ENCODE measurements at regions of chr2 and their contacts with region 1.

Region 1: DNA sequence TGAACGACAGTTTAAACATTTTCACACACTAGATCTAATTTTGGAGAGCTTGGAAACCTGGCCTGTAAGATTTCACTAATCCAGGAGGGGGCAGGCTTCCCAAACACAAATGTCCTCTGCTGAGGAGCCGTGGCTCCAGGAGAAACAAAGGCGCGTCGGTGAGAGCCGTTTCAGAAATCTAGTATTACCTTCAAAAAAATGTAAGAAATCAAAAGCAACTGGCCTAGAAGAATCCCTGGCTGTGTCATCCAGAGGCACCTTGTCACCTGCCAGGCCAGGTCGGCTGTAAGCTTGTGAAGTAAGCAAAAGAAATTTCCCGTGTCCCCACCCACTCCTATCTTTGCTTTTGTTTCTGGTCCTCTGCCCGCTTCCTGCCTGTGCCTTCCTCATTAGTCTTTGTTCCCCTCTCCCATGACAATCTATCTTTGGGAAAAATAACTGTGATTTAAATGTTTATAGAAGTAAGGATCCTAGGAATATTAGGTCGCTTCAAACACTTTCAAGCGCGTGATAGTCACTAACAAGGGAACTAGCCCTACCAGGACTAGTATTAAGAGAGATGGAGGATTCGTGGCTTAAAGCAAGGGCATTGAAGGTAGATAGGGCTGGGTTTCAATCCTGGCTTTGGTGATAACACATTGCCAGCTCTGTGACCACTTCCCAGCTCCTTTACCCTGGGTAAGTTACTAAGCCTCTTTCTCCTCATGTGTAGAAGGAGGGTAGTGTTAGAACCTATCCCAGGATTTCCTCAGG is 99.5 kb upstream of the STK39 start:
- DNase-seq: peak; percentile 75
- ATAC-seq: peak; percentile 74
- H3K4me3 ChIP-seq: peak overlapping the region in 4 of 5 experiments; percentile 39 to 63 (median 52)
- H3K4me3 Mint-ChIP-seq: peak overlapping the region; percentile 86
- H3K27ac ChIP-seq: no peak overlapping the region
- H3K27ac Mint-ChIP-seq: no peak overlapping the region
- H3K4me1 ChIP-seq: peaks cover 17 to 22% of the 10 kb centered on the region in 2 donors
- H3K4me1 Mint-ChIP-seq: peaks cover 17% of the 10 kb centered on the region
- H3K27me3 ChIP-seq: no peaks in the 10 kb centered on the region
- H3K27me3 Mint-ChIP-seq: peaks cover 5% of the 10 kb centered on the region
- CTCF ChIP-seq: peak; percentile 88

Region 2: GRCh38 chr2:168336864-168337263 is 10.0 kb before region 1 on chr2:
- CTCF ChIA-PET with region 1: interaction called, 14 read pairs
- POLR2A ChIA-PET with region 1: no interaction called
- intact Hi-C with region 1: no loop called
- DNase-seq: peak; percentile 39
- ATAC-seq: peak; percentile 68
- H3K4me3 ChIP-seq: no peak overlapping the region
- H3K4me3 Mint-ChIP-seq: no peak overlapping the region
- H3K27ac ChIP-seq: no peak overlapping the region
- H3K27ac Mint-ChIP-seq: no peak overlapping the region
- H3K4me1 ChIP-seq: no peaks in the 10 kb centered on the region
- H3K4me1 Mint-ChIP-seq: peaks cover 3% of the 10 kb centered on the region
- H3K27me3 ChIP-seq: no peaks in the 10 kb centered on the region
- H3K27me3 Mint-ChIP-seq: peaks cover 10% of the 10 kb centered on the region
- CTCF ChIP-seq: peak; percentile 33

Region 3: DNA sequence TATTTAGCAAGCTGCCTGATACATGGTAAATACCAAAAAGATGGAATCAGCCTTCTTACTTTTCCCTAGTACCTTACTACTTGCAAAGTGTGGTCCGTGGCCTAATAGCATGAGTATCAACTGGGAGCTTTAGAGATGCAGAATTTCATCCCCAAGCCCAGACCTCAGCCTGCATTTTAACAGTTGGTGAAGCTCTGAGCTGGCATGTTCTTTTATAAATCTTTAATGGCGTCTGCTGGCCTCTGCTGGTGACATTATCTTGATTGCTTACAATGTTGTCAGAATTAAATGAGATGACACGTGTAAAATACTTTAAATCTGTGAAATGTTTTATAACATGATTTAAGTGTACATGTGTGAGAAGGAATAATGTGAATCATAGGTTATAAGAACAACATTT is 340.4 kb after region 1 on chr2:
- CTCF ChIA-PET with region 1: interaction called, 88 read pairs
- POLR2A ChIA-PET with region 1: no interaction called
- intact Hi-C with region 1: loop called (anchors 1 kb)
- DNase-seq: peak; percentile 47
- ATAC-seq: no peak
- H3K4me3 ChIP-seq: no peak overlapping the region
- H3K4me3 Mint-ChIP-seq: no peak overlapping the region
- H3K27ac ChIP-seq: no peak overlapping the region
- H3K27ac Mint-ChIP-seq: no peak overlapping the region
- H3K4me1 ChIP-seq: no peaks in the 10 kb centered on the region
- H3K4me1 Mint-ChIP-seq: no peaks in the 10 kb centered on the region
- H3K27me3 ChIP-seq: no peaks in the 10 kb centered on the region
- H3K27me3 Mint-ChIP-seq: no peaks in the 10 kb centered on the region
- CTCF ChIP-seq: peak; percentile 45

Region 4: DNA sequence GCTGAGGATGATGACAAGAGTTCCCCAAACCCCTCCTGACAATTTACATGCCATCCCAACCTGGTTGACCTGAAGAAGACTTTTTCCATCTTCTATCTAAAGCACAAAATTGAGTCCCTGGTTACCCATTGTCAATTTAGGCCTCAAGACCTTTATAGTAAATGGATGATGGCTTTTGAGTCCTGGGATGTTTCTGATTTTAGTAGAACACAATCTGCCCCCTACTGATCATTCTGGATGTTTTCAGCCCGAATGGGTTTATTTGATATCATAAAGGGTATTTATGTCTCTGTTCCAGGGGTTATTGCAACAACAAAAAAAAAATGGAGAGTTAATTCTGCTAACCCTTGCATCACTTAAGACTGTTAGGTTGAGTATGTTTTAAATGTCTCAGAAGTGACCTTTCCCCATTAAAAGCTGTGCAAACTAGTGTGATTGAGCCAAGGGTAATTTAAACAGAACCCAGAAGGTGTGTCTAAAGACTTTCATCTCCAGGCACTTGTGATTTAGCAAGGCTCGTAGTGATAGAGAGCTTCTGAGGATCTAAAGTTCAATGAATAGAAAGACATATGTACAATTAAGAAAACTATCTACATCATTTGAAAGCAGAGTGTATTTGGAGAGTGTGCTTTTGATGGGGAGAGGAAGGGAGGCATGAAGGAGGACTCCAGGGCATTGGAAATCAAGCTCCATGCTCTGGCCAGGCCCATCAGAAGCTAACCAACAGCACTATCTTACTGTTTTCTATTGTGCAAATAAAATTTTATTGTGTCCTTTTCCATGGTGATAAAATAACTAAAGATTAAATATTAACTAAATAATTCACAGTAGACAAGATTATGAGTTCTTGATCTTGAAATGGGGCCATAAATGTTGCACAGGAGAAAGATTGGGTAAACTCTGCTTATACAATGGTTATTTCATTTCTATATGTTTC is 358.9 kb after region 1 on chr2:
- CTCF ChIA-PET with region 1: interaction called, 39 read pairs
- POLR2A ChIA-PET with region 1: no interaction called
- intact Hi-C with region 1: loop called (anchors 1 kb)
- DNase-seq: peak; percentile 17
- ATAC-seq: no peak
- H3K4me3 ChIP-seq: no peak overlapping the region
- H3K4me3 Mint-ChIP-seq: no peak overlapping the region
- H3K27ac ChIP-seq: no peak overlapping the region
- H3K27ac Mint-ChIP-seq: no peak overlapping the region
- H3K4me1 ChIP-seq: no peaks in the 10 kb centered on the region
- H3K4me1 Mint-ChIP-seq: no peaks in the 10 kb centered on the region
- H3K27me3 ChIP-seq: no peaks in the 10 kb centered on the region
- H3K27me3 Mint-ChIP-seq: no peaks in the 10 kb centered on the region
- CTCF ChIP-seq: peak; percentile 26

Region 5: GRCh38 chr2:168758970-168759820 is 412.3 kb after region 1 on chr2:
- CTCF ChIA-PET with region 1: interaction called, 62 read pairs
- POLR2A ChIA-PET with region 1: no interaction called
- intact Hi-C with region 1: no loop called
- DNase-seq: peak; percentile 55
- ATAC-seq: peak; percentile 41
- H3K4me3 ChIP-seq: no peak overlapping the region
- H3K4me3 Mint-ChIP-seq: no peak overlapping the region
- H3K27ac ChIP-seq: no peak overlapping the region
- H3K27ac Mint-ChIP-seq: no peak overlapping the region
- H3K4me1 ChIP-seq: no peaks in the 10 kb centered on the region
- H3K4me1 Mint-ChIP-seq: peaks cover 4% of the 10 kb centered on the region
- H3K27me3 ChIP-seq: no peaks in the 10 kb centered on the region
- H3K27me3 Mint-ChIP-seq: no peaks in the 10 kb centered on the region
- CTCF ChIP-seq: peak; percentile 61

Region 6: DNA sequence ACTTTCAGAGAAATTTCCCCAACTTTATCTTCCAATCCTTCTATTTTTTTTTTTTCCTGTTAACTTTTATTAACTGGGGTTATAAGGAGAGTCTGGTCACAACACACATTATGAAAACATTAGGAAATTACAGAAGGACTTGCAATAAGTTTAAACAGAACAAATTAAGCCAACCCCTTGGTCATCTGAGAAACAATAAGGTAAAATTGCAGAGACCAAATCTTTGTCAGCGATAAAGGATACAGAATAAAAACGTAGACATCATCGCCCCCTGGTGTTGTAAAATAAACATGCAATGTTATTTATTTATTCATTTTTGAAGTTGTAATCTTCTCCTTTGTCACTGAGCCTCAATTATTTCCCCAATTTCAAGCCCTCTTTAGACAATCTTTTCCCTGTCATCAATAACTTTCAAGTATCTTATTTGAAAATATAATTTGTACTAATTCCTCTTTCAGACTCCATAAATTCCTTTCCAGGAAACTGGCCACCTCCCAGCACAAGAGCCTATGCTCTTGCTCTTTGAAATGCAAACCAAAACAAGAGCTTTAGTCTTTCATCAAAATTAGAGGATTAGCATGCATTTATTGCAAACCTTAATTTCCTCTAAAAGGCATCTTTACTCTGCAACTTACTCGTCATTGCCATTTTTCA is 573.7 kb after region 1 on chr2:
- CTCF ChIA-PET with region 1: interaction called, 31 read pairs
- POLR2A ChIA-PET with region 1: no interaction called
- intact Hi-C with region 1: loop called (anchors 1 kb)
- DNase-seq: peak; percentile 47
- ATAC-seq: no peak
- H3K4me3 ChIP-seq: no peak overlapping the region
- H3K4me3 Mint-ChIP-seq: no peak overlapping the region
- H3K27ac ChIP-seq: no peak overlapping the region
- H3K27ac Mint-ChIP-seq: no peak overlapping the region
- H3K4me1 ChIP-seq: no peaks in the 10 kb centered on the region
- H3K4me1 Mint-ChIP-seq: no peaks in the 10 kb centered on the region
- H3K27me3 ChIP-seq: no peaks in the 10 kb centered on the region
- H3K27me3 Mint-ChIP-seq: peaks cover 16% of the 10 kb centered on the region
- CTCF ChIP-seq: peak; percentile 86